Mammary epithelial cell (primary cell): ENCODE measurements at regions of chr1 and their contacts with region 1.

Region 1: GRCh38 chr1:184805667-184806295 is 51.1 kb upstream of the EDEM3 start:
- DNase-seq: peak; percentile 70
- H3K4me3 ChIP-seq: no peak overlapping the region
- H3K27ac ChIP-seq: no peak overlapping the region
- H3K4me1 ChIP-seq: peaks cover 6% of the 10 kb centered on the region
- H3K27me3 ChIP-seq: no peaks in the 10 kb centered on the region
- CTCF ChIP-seq: peak; percentile 83 to 89

Region 2: DNA sequence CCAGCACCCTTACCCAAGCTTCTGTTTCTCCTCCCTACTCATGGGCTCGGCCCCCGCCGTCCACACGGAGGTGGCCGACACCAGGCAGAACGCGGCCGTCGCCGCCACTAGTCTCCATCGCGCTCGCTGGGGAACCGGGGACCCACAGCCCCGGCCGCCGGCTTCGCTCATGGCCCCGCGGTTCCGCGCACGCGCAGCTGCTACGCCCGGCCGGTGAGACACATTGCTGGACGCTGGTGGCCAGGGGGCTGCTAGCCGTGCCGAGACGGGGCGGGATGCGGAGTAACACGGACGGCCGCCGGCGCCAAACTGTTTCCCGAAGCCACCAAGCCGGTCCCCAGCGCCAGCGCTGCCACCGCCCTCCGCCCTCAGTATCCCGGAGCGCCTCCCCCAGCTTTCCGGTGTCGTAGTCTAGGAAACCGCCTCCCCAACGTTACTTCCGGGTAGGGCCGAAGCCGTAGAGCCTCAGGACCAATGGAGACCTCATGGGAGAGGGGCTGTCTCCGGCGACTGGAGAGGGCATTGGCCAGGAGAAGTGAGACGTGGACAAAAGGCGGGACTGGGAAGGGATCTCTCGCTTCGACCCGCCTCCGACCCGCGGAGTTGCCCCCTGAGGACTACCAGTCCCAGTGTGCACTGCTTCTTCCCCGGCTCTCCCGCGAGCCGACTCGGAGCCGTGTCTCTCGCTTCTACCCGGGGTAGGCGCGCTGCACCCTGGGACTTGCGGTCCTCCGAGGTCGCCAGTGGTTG is 51.1 kb before region 1 on chr1 and contains the start of gene EDEM3:
- CTCF ChIA-PET with region 1: no interaction called
- dilution Hi-C with region 1: no loop called
- in situ Hi-C with region 1: no loop called
- intact Hi-C with region 1: no loop called
- DNase-seq: peak; percentile 99
- H3K4me3 ChIP-seq: peak within 1 kb of the TSS; percentile 86 to 100 (median 90)
- H3K27ac ChIP-seq: peak within 1 kb of the TSS; percentile 70
- H3K4me1 ChIP-seq: peaks cover 5% of the 10 kb centered on the region
- H3K27me3 ChIP-seq: no peaks in the 10 kb centered on the region
- CTCF ChIP-seq: no peak
- total RNA-seq, gene EDEM3: 30.7 to 33.4 TPM

Region 3: GRCh38 chr1:184973272-184974055 is 167.7 kb after region 1 on chr1:
- CTCF ChIA-PET with region 1: no interaction called
- dilution Hi-C with region 1: no loop called
- in situ Hi-C with region 1: no loop called
- intact Hi-C with region 1: loop called (anchors 2 kb)
- DNase-seq: peak; percentile 81
- H3K4me3 ChIP-seq: peak overlapping the region; percentile 74 to 82 (median 81)
- H3K27ac ChIP-seq: peak overlapping the region; percentile 23
- H3K4me1 ChIP-seq: peaks cover 17% of the 10 kb centered on the region
- H3K27me3 ChIP-seq: no peaks in the 10 kb centered on the region
- CTCF ChIP-seq: no peak

Region 4: DNA sequence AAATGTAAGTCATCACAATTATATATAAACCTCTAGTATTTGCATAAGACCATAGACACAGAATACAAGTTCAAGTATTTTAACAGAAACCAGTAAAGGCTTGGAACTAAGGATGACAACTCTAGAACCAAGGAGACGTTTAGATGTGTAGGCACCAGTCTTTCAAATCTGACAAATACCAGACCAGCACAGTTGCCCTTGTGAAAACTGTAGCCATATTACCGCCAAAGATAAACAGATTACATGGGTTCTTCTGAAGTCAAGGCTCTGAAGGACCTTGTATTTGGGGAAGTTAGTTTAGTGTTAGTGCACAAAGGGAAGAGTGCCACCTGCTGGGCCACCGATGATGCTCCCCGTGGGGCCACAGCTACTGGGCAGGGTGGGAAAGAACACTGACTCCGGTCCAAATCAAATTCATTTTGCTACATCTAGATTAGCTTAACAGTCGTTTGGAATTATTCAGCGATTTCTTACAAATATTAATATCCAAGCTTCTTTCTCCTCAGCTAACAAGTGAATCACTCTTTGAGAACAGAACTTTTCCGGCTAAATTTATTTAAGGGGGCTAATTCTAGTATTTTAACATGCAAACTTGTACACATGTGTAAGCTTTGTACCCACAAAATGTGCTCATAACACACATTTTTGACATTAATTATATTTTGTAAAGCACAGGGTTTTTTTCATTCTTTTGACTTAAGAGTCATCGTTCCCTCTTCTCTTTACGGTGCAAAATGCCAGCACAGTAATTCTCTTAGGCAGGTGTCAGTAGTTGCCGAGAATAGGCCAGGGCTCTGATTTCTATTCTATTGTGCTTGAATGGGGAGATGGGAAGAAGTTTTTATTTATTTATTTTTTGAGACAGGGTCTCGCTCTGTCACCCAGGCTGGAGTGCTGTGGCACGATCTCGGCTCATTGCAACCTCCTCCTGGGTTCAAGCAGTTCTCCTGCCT is 176.5 kb after region 1 on chr1:
- CTCF ChIA-PET with region 1: no interaction called
- dilution Hi-C with region 1: no loop called
- in situ Hi-C with region 1: loop called (anchors 5 kb)
- intact Hi-C with region 1: loop called (anchors 1 kb)
- DNase-seq: peak; percentile 58
- H3K4me3 ChIP-seq: no peak overlapping the region
- H3K27ac ChIP-seq: no peak overlapping the region
- H3K4me1 ChIP-seq: no peaks in the 10 kb centered on the region
- H3K27me3 ChIP-seq: peaks cover 2% of the 10 kb centered on the region
- CTCF ChIP-seq: peak; percentile 94 to 98

Region 5: DNA sequence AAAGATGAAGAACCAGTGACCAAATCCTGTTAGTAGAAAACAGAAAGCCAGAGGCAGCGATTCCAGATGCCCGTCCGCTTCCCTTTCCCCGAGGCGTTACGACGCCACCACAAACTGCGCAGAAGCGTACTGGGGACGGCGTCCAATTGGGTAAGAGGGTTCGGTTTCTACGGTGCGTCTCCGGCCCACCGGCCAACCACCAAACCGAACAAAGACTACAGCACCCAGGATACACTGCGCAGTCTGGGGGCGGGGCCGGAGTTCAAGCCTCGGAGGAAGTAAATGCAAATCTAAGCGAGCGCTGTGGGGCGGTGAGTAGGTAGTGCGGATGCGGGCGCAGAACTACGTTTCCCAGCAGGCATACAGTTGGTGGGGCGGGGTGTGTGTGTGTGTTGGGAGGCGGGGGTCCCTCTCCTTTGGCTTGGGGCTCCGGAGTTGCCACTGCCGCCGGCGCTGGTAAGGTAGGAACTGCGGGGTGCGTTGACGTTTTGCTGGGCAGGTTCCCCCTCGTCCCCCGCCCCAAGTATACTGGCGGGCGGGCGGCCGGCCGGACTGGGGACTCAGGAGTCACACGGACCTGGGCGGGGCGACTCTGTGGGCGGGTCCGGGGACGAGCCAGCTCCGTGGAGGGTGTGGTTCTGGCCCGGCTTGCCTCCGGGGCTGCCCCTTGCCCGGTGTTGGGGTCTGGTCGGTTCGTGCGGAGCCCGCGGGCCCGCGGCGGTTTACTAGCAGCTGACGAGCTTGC is 351.2 kb after region 1 on chr1 and contains the starts of genes SWT1 and TRMT1L:
- CTCF ChIA-PET with region 1: no interaction called
- dilution Hi-C with region 1: no loop called
- in situ Hi-C with region 1: loop called (anchors 25 kb)
- intact Hi-C with region 1: no loop called
- DNase-seq: peak; percentile 99
- H3K4me3 ChIP-seq: peak within 1 kb of the TSS; percentile 87 to 94 (median 89)
- H3K27ac ChIP-seq: peak within 1 kb of the TSS; percentile 75
- H3K4me1 ChIP-seq: peaks cover 20% of the 10 kb centered on the region
- H3K27me3 ChIP-seq: no peaks in the 10 kb centered on the region
- CTCF ChIP-seq: no peak
- total RNA-seq, gene SWT1: 2.4 to 4.8 TPM
- total RNA-seq, gene TRMT1L: 17.0 to 23.0 TPM

Region 6: GRCh38 chr1:185170291-185170848 is 364.6 kb after region 1 on chr1:
- CTCF ChIA-PET with region 1: no interaction called
- dilution Hi-C with region 1: no loop called
- in situ Hi-C with region 1: loop called (anchors 25 kb)
- intact Hi-C with region 1: loop called (anchors 1 kb)
- DNase-seq: peak; percentile 42
- H3K4me3 ChIP-seq: no peak overlapping the region
- H3K27ac ChIP-seq: no peak overlapping the region
- H3K4me1 ChIP-seq: no peaks in the 10 kb centered on the region
- H3K27me3 ChIP-seq: no peaks in the 10 kb centered on the region
- CTCF ChIP-seq: peak; percentile 55 to 78

Region 7: GRCh38 chr1:185681034-185681633 is 875.4 kb after region 1 on chr1:
- CTCF ChIA-PET with region 1: no interaction called
- dilution Hi-C with region 1: no loop called
- in situ Hi-C with region 1: loop called in 1 of 2 experiments (anchors 25 kb)
- intact Hi-C with region 1: no loop called
- DNase-seq: peak; percentile 41
- H3K4me3 ChIP-seq: no peak overlapping the region
- H3K27ac ChIP-seq: no peak overlapping the region
- H3K4me1 ChIP-seq: no peaks in the 10 kb centered on the region
- H3K27me3 ChIP-seq: no peaks in the 10 kb centered on the region
- CTCF ChIP-seq: peak; percentile 67 to 68

Region 8: DNA sequence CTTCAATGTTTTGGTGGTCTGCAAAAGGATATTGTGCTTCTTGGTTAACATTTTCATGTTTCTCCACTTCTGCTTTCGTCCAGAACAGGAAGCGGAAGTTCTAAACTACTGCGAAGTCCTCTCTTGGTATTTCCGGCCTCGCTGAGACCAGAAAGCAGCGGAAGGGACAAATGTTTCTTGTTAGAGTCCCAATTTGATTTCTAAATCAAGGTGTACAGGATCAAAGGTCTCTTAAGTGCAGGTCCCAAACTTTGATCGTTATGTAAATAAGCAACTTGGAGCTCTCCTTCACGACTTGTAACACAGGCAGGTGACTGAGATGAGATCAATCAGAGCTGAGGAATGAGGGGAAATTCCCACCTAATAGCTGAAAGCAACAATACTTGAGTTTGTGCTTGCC is 888.3 kb after region 1 on chr1:
- CTCF ChIA-PET with region 1: no interaction called
- dilution Hi-C with region 1: no loop called
- in situ Hi-C with region 1: loop called in 1 of 2 experiments (anchors 25 kb)
- intact Hi-C with region 1: loop called (anchors 10 kb)
- DNase-seq: no peak
- H3K4me3 ChIP-seq: no peak overlapping the region
- H3K27ac ChIP-seq: no peak overlapping the region
- H3K4me1 ChIP-seq: no peaks in the 10 kb centered on the region
- H3K27me3 ChIP-seq: no peaks in the 10 kb centered on the region
- CTCF ChIP-seq: no peak